Activated CD4-positive, alpha-beta T cell treated with anti-CD3 and anti-CD28 coated beads for 36 hours (primary cell): ENCODE measurements at regions of chr1 and their contacts with region 1.

Region 1: GRCh38 chr1:18902523-18903290 is at the start of gene ALDH4A1:
- DNase-seq: peak; percentile 96
- ATAC-seq: peak; percentile 99
- H3K4me3 Mint-ChIP-seq: peak within 1 kb of the TSS; percentile 86
- H3K27ac Mint-ChIP-seq: peak within 1 kb of the TSS; percentile 98
- H3K4me1 Mint-ChIP-seq: peaks cover 20% of the 10 kb centered on the region
- H3K27me3 Mint-ChIP-seq: no peaks in the 10 kb centered on the region
- total RNA-seq, gene ALDH4A1: 4.4 to 5.8 TPM

Region 2: GRCh38 chr1:18828224-18828623 is 74.5 kb before region 1 on chr1:
- CTCF ChIA-PET with region 1: no interaction called
- POLR2A ChIA-PET with region 1: no interaction called
- intact Hi-C with region 1: no loop called
- DNase-seq: no peak
- ATAC-seq: no peak
- H3K4me3 Mint-ChIP-seq: no peak overlapping the region
- H3K27ac Mint-ChIP-seq: no peak overlapping the region
- H3K4me1 Mint-ChIP-seq: no peaks in the 10 kb centered on the region
- H3K27me3 Mint-ChIP-seq: peaks cover 14% of the 10 kb centered on the region

Region 3: GRCh38 chr1:18949686-18950400 is 47.1 kb after region 1 on chr1:
- CTCF ChIA-PET with region 1: interaction called, 28 read pairs
- POLR2A ChIA-PET with region 1: interaction called, 3 read pairs
- intact Hi-C with region 1: loop called (anchors 1 to 2 kb)
- DNase-seq: peak; percentile 64
- ATAC-seq: no peak
- H3K4me3 Mint-ChIP-seq: peak overlapping the region; percentile 86
- H3K27ac Mint-ChIP-seq: peak overlapping the region; percentile 92
- H3K4me1 Mint-ChIP-seq: peaks cover 93% of the 10 kb centered on the region
- H3K27me3 Mint-ChIP-seq: no peaks in the 10 kb centered on the region

Region 4: GRCh38 chr1:19010995-19011844 is 108.5 kb after region 1 on chr1:
- CTCF ChIA-PET with region 1: interaction called, 10 read pairs
- POLR2A ChIA-PET with region 1: no interaction called
- intact Hi-C with region 1: loop called in 1 of 2 experiments (anchors 1 kb)
- DNase-seq: peak; percentile 93
- ATAC-seq: peak; percentile 97
- H3K4me3 Mint-ChIP-seq: peak overlapping the region; percentile 12
- H3K27ac Mint-ChIP-seq: peak overlapping the region; percentile 87
- H3K4me1 Mint-ChIP-seq: peaks cover 36% of the 10 kb centered on the region
- H3K27me3 Mint-ChIP-seq: peaks cover 2% of the 10 kb centered on the region

Region 5: DNA sequence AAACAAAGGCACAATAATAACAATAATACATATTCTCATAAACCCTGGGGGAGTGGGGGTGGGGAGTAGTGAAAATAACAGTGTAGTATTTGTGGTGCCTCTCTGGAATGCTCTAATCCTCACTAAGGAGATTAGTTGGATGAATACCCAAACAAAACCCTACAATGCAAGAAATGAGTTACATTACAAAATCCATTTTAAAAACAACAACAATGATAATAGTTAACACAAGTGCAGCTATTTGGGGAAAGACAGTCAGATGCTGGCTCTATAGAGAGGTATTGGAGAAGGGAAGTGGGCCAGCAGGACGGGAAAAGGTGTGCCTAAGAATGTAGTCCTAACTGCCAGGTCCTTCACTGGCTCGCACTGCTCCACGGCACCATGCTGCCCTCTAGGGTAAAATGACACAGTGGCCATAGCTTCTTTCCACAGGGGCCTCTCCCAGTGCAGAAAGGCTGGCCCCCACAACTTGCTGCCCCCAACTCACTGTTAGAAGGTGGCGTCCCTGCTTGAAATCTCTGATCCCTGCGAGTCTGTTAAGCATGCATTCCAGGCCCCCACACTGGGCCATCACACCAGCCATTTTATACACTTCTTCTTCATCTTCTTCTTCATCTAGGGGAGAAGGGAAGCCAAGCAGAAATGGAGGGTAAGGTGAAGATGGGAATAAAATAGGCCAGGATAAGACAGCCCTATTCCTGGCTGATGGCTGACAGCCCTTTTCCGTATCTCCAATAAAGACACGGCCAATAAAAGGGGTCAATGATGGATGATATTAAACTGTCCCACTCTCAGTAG is 193.5 kb after region 1 on chr1:
- CTCF ChIA-PET with region 1: interaction called, 7 read pairs
- POLR2A ChIA-PET with region 1: no interaction called
- intact Hi-C with region 1: loop called in 1 of 2 experiments (anchors 1 kb)
- DNase-seq: peak; percentile 41
- ATAC-seq: no peak
- H3K4me3 Mint-ChIP-seq: no peak overlapping the region
- H3K27ac Mint-ChIP-seq: no peak overlapping the region
- H3K4me1 Mint-ChIP-seq: no peaks in the 10 kb centered on the region
- H3K27me3 Mint-ChIP-seq: no peaks in the 10 kb centered on the region

Region 6: GRCh38 chr1:19251305-19252196 is 348.8 kb after region 1 on chr1 and contains the starts of genes EMC1 and MRTO4:
- CTCF ChIA-PET with region 1: interaction called, 3 read pairs
- POLR2A ChIA-PET with region 1: no interaction called
- intact Hi-C with region 1: loop called in 1 of 2 experiments (anchors 1 kb)
- DNase-seq: peak; percentile 94
- ATAC-seq: peak; percentile 87
- H3K4me3 Mint-ChIP-seq: peak within 1 kb of the TSS; percentile 99
- H3K27ac Mint-ChIP-seq: peak within 1 kb of the TSS; percentile 96
- H3K4me1 Mint-ChIP-seq: peaks cover 45% of the 10 kb centered on the region
- H3K27me3 Mint-ChIP-seq: no peaks in the 10 kb centered on the region
- total RNA-seq, gene EMC1: 45.0 to 59.0 TPM
- total RNA-seq, gene MRTO4: 82.6 to 95.0 TPM

Region 7: GRCh38 chr1:19661721-19662228 is 759.1 kb after region 1 on chr1:
- CTCF ChIA-PET with region 1: no interaction called
- POLR2A ChIA-PET with region 1: no interaction called
- intact Hi-C with region 1: loop called in 1 of 2 experiments (anchors 5 kb)
- DNase-seq: peak; percentile 69
- ATAC-seq: no peak
- H3K4me3 Mint-ChIP-seq: no peak overlapping the region
- H3K27ac Mint-ChIP-seq: no peak overlapping the region
- H3K4me1 Mint-ChIP-seq: peaks cover 26% of the 10 kb centered on the region
- H3K27me3 Mint-ChIP-seq: peaks cover 17% of the 10 kb centered on the region